ENCODE measurements at regions of chr1 and their contacts with region 1.

Region 1: DNA sequence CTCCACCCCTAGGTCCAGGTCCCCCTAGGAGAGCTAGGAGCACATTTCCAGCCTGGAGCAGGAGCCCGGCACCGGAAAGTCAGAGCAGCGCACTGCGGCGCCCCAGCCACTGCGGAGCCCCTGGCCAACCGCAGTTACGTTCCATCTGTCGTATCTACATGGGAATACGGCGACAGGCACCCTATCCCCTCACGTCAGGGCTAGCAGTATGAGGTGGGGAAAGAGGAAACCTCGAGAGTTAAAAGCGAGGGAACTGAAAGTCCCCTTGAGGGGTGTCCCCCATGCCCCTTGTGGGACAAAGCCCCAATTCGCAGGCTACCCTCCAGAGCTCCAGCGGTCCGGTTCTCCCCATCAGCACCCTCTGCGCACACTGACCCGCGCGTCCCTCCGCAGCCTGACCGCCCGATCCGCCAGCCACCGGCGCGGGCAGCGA is 995 bp downstream of the COLGALT2 start:
- DNase-seq: peak in 6 of 14 experiments; percentile 0 to 44 (median 18)
- ATAC-seq: peak; percentile 25
- H3K4me3 ChIP-seq: peak overlapping the region; percentile 56
- H3K4me3 Mint-ChIP-seq: peak overlapping the region; percentile 79
- H3K27ac ChIP-seq: no peak overlapping the region
- H3K27ac Mint-ChIP-seq: no peak overlapping the region
- H3K4me1 ChIP-seq: peaks cover 19% of the 10 kb centered on the region
- H3K4me1 Mint-ChIP-seq: peaks cover 6% of the 10 kb centered on the region
- H3K27me3 ChIP-seq: peaks cover 26 to 49% of the 10 kb centered on the region in 2 experiments
- H3K27me3 Mint-ChIP-seq: peaks cover 79% of the 10 kb centered on the region
- CTCF ChIP-seq: no peak

Region 2: GRCh38 chr1:183646776-183647175 is 389.8 kb before region 1 on chr1:
- CTCF ChIA-PET with region 1: no interaction called
- POLR2A ChIA-PET with region 1: no interaction called
- intact Hi-C with region 1: loop called in 1 of 2 experiments (anchors 5 kb)
- DNase-seq: no peak
- ATAC-seq: no peak
- H3K4me3 ChIP-seq: no peak overlapping the region
- H3K4me3 Mint-ChIP-seq: no peak overlapping the region
- H3K27ac ChIP-seq: no peak overlapping the region
- H3K27ac Mint-ChIP-seq: no peak overlapping the region
- H3K4me1 ChIP-seq: peaks cover 6% of the 10 kb centered on the region
- H3K4me1 Mint-ChIP-seq: peaks cover 7% of the 10 kb centered on the region
- H3K27me3 ChIP-seq: no peaks in the 10 kb centered on the region
- H3K27me3 Mint-ChIP-seq: no peaks in the 10 kb centered on the region
- CTCF ChIP-seq: no peak

Region 3: DNA sequence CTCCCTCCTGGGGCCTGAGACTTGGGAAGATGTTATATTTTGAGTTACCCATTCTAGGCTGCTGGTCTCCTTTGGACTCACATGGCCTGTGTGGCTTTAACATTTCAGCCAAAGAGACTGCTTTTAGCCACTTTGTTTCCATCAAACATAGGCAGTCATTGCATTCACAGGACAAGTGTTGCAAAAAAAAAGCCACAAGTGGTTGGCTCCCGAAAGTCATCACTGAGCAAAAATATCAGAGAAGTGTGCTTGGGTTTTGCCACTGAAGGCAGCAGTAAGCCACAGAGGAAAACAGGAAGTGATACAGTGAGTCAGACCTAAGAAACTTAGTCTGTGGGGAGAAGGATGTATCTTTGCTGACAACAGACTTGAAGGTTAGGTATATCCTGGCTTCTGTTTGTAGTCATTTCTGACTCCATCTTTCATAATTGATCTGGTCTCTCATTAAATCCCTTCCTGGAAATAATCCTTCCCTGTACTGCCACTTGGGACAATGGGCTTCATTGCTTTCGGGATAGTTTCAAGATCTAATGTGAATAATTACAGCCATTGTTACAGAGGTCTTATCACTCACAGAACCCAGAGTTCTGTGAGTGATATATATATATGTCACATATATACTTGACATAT is 79.9 kb before region 1 on chr1:
- CTCF ChIA-PET with region 1: no interaction called
- POLR2A ChIA-PET with region 1: no interaction called
- intact Hi-C with region 1: loop called in 1 of 2 experiments (anchors 5 kb)
- DNase-seq: peak in 13 of 14 experiments; percentile 9 to 91 (median 36)
- ATAC-seq: peak; percentile 100
- H3K4me3 ChIP-seq: no peak overlapping the region
- H3K4me3 Mint-ChIP-seq: peak overlapping the region; percentile 7
- H3K27ac ChIP-seq: peak overlapping the region; percentile 60 to 74
- H3K27ac Mint-ChIP-seq: no peak overlapping the region
- H3K4me1 ChIP-seq: peaks cover 20% of the 10 kb centered on the region
- H3K4me1 Mint-ChIP-seq: peaks cover 6% of the 10 kb centered on the region
- H3K27me3 ChIP-seq: no peaks in the 10 kb centered on the region
- H3K27me3 Mint-ChIP-seq: no peaks in the 10 kb centered on the region
- CTCF ChIP-seq: peak; percentile 39

Region 4: DNA sequence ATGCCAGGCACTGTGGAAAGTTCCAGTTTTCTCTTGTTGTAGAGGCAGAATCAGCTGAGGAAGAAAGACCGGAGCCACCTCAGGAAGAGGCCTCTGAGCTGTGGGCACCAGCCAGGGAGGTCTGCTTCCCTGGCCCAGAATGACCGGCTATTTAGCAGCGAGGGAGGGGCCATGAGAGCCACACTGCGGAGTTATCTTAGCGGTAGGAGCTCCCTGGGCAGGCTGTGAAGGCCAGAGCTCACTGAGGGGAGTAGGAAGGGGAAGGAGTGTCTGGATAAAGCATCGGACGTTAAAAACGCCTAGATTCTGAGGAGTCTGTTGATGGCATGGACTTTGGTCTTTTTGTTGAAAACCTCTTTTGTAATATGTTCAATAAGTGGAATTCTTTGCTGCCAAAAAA is 51.5 kb after region 1 on chr1:
- CTCF ChIA-PET with region 1: no interaction called
- POLR2A ChIA-PET with region 1: no interaction called
- intact Hi-C with region 1: no loop called
- DNase-seq: no peak
- ATAC-seq: no peak
- H3K4me3 ChIP-seq: no peak overlapping the region
- H3K4me3 Mint-ChIP-seq: no peak overlapping the region
- H3K27ac ChIP-seq: no peak overlapping the region
- H3K27ac Mint-ChIP-seq: no peak overlapping the region
- H3K4me1 ChIP-seq: no peaks in the 10 kb centered on the region
- H3K4me1 Mint-ChIP-seq: no peaks in the 10 kb centered on the region
- H3K27me3 ChIP-seq: no peaks in the 10 kb centered on the region
- H3K27me3 Mint-ChIP-seq: no peaks in the 10 kb centered on the region
- CTCF ChIP-seq: no peak

Region 5: GRCh38 chr1:185129708-185130107 is 1093.2 kb after region 1 on chr1:
- CTCF ChIA-PET with region 1: no interaction called
- POLR2A ChIA-PET with region 1: no interaction called
- intact Hi-C with region 1: no loop called
- DNase-seq: no peak
- ATAC-seq: no peak
- H3K4me3 ChIP-seq: no peak overlapping the region
- H3K4me3 Mint-ChIP-seq: no peak overlapping the region
- H3K27ac ChIP-seq: no peak overlapping the region
- H3K27ac Mint-ChIP-seq: no peak overlapping the region
- H3K4me1 ChIP-seq: no peaks in the 10 kb centered on the region
- H3K4me1 Mint-ChIP-seq: no peaks in the 10 kb centered on the region
- H3K27me3 ChIP-seq: no peaks in the 10 kb centered on the region
- H3K27me3 Mint-ChIP-seq: no peaks in the 10 kb centered on the region
- CTCF ChIP-seq: no peak

Measured in CD4-positive, alpha-beta T cell (primary cell).